ENCODE measurements at regions of chr12 and their contacts with region 1.

Region 1: DNA sequence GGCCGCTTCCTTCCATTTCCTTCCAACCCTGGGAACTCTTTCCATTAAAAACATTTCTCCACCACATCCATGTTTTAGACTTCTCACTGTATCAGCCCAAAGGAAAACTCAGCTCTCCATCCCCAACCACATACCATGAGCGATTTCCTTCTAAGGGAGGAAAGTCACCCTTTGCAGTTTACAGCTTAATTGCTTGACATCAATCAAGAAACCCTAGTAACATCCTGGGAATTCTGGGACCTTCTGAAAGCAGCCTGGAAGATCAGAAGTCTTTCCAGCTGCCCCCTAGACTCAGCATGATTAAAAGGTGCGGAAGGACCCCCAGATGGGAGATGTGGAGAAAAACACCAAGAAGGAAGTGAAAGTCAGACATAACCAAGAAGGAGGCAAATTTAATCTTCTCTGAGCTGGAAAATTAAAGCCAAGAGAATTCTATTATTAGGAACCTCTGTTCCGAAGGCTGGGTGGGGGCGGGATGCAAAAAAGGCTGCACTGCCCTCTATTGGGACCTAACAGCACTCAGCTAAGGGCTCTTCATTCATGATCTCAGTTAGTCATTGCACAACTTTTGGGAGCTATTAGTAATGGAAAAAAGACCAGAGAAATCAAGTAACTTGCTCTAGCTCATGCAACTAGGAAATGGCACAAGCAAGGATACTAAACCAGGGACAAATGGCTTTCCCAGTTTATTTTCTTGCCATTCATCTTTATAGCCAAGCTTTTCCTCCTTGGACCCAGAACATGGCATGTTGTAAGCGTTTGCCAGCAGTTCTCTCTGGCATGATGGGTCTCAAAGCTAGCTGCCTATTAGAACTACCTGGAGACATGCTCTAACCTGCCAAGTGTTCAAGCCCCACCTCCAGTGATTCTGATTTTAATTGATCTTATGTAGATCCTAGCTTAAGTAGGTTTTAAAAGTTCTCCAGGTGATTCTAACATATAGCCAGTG is 73.1 kb upstream of the PLXNC1 start:
- DNase-seq: peak; percentile 63
- H3K4me3 ChIP-seq: no peak overlapping the region
- H3K27me3 ChIP-seq: no peaks in the 10 kb centered on the region
- CTCF ChIP-seq: peak; percentile 87

Region 2: DNA sequence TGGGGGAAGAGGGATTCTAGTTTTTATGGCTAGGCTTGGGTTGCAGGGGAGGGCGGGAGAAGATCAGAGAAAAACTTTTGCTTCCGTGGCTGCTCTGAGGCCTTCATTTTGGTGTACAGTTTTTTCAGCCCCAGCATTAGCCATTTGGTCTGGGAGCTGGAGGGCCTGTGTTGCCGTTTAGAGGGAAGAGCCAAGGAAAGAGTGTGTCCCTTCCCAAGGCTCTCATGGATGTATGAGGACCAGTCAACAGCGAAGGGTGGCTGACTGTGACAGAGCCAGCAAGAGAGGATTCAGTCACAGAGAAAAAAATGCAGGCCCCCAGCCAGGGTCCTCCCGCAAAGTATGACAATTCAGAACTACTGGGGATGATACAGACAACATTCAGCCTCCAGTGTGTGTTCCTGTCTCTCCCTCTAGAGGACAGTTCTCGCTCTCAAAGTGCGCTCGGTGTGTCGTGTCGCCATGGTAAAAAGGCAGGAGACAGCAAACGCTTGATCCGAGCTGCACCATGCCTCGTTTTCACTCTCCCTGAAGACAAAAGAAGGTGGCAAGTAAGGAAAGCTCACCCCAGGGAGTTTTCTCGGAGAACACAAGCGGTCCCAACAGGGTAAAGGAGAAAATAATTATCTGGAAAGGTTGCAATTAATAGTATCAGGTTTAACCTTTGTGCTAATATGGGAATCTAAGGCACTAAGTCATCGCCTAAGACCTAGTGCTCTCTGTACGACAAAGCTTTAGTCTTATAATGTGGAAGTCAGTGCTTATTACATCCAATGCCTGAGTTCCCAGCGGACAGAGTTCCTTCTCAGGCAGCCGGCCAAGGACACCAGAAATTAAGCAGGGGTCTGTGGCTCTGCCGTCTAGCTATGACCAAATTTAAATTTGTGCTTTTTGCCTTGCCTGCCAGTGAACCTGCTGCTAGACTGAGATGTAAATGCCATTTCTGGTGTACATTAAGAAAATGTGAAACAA is 84.1 kb before region 1 on chr12:
- CTCF ChIA-PET with region 1: interaction called, 14 read pairs
- POLR2A ChIA-PET with region 1: no interaction called
- DNase-seq: no peak
- H3K4me3 ChIP-seq: no peak overlapping the region
- H3K27me3 ChIP-seq: no peaks in the 10 kb centered on the region
- CTCF ChIP-seq: peak; percentile 65

Region 3: GRCh38 chr12:94039914-94040313 is 35.3 kb before region 1 on chr12:
- CTCF ChIA-PET with region 1: no interaction called
- POLR2A ChIA-PET with region 1: no interaction called
- DNase-seq: no peak
- H3K4me3 ChIP-seq: no peak overlapping the region
- H3K27me3 ChIP-seq: no peaks in the 10 kb centered on the region
- CTCF ChIP-seq: no peak

Region 4: GRCh38 chr12:94092516-94093241 is 17.4 kb after region 1 on chr12:
- CTCF ChIA-PET with region 1: interaction called, 22 read pairs
- POLR2A ChIA-PET with region 1: no interaction called
- DNase-seq: no peak
- H3K4me3 ChIP-seq: no peak overlapping the region
- H3K27me3 ChIP-seq: no peaks in the 10 kb centered on the region
- CTCF ChIP-seq: no peak

Region 5: DNA sequence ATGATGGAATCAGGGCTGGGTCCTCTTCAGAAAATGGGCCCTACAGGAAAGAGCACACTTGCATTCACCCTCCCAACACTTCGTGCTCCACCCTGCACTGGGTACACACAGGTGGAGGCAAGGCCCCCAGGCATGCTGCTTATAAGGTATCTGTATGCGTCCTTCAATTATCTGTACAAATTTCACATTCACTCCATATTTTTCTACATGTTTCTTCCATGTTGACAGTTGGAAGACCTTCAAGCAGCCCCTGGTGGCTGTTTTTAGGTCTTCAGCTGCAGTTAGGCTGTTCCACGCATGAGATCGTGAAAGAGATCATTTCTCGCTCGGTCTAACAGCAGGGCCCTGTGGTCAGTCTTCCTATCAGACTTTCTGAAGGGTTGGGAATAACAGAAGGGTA is 120.2 kb after region 1 on chr12:
- CTCF ChIA-PET with region 1: no interaction called
- POLR2A ChIA-PET with region 1: no interaction called
- DNase-seq: no peak
- H3K4me3 ChIP-seq: no peak overlapping the region
- H3K27me3 ChIP-seq: no peaks in the 10 kb centered on the region
- CTCF ChIP-seq: 0 out of 2 replicates have a peak, but pooled peaks have one; percentile 4

Region 6: GRCh38 chr12:94309373-94309772 is 234.1 kb after region 1 on chr12:
- CTCF ChIA-PET with region 1: no interaction called
- POLR2A ChIA-PET with region 1: no interaction called
- DNase-seq: no peak
- H3K4me3 ChIP-seq: no peak overlapping the region
- H3K27me3 ChIP-seq: no peaks in the 10 kb centered on the region
- CTCF ChIP-seq: no peak